H1 (cell line): ENCODE measurements at regions of chr2 and their contacts with region 1.

Region 1: GRCh38 chr2:47767880-47768609 is 14.9 kb upstream of the MSH6 start:
- DNase-seq: peak; percentile 54 to 99
- H3K4me3 ChIP-seq: no peak overlapping the region
- H3K27ac ChIP-seq: no peak overlapping the region
- H3K4me1 ChIP-seq: no peaks in the 10 kb centered on the region
- H3K27me3 ChIP-seq: no peaks in the 10 kb centered on the region
- CTCF ChIP-seq: peak; percentile 93 to 98 (median 95)
- EP300 ChIP-seq: no peak
- POLR2A ChIP-seq: no peak
- RAD21 ChIP-seq: peak; percentile 100

Region 2: DNA sequence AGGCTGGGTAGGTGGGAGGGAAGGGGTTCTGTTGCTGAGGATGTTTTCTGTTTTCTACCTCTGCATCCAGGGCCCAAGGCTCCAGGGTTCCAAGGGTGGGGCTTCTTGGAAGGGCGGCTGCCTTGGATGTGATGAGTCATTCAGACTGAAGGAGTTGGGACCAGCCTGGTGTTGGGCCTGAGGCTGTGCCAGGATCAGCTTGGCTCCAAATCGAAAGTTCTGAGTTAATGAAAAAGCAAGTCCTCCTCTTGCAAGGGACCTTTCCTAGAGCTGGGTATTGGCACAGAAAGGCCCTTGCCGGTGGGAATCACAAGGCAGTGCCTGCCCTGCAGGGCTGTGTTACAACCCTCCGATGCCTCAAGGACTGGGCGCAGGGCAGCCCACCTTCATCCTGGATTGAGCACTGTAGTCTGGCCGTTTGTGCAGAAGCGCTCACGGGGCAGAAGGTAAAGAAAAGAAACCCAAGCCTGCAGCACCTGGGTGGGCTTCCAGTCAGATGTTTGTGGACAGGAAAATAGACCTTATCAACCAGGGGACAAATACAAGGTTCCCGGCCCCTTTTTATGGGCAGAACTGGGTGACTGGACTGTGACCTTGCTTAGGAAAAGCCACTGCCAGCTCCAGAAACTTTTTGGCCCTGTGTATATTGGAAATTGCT is 799.9 kb before region 1 on chr2:
- CTCF ChIA-PET with region 1: no interaction called
- POLR2A ChIA-PET with region 1: no interaction called
- DNase-seq: no peak
- H3K4me3 ChIP-seq: no peak overlapping the region
- H3K27ac ChIP-seq: no peak overlapping the region
- H3K4me1 ChIP-seq: no peaks in the 10 kb centered on the region
- H3K27me3 ChIP-seq: no peaks in the 10 kb centered on the region
- CTCF ChIP-seq: no peak
- EP300 ChIP-seq: no peak
- POLR2A ChIP-seq: no peak
- RAD21 ChIP-seq: no peak

Region 3: GRCh38 chr2:47437287-47437686 is 330.8 kb before region 1 on chr2:
- CTCF ChIA-PET with region 1: interaction called, 19 read pairs
- POLR2A ChIA-PET with region 1: no interaction called
- DNase-seq: no peak
- H3K4me3 ChIP-seq: no peak overlapping the region
- H3K27ac ChIP-seq: no peak overlapping the region
- H3K4me1 ChIP-seq: no peaks in the 10 kb centered on the region
- H3K27me3 ChIP-seq: no peaks in the 10 kb centered on the region
- CTCF ChIP-seq: no peak; a peak in 1 of 4 replicates
- EP300 ChIP-seq: no peak
- POLR2A ChIP-seq: no peak
- RAD21 ChIP-seq: peak; percentile 38 to 47

Region 4: DNA sequence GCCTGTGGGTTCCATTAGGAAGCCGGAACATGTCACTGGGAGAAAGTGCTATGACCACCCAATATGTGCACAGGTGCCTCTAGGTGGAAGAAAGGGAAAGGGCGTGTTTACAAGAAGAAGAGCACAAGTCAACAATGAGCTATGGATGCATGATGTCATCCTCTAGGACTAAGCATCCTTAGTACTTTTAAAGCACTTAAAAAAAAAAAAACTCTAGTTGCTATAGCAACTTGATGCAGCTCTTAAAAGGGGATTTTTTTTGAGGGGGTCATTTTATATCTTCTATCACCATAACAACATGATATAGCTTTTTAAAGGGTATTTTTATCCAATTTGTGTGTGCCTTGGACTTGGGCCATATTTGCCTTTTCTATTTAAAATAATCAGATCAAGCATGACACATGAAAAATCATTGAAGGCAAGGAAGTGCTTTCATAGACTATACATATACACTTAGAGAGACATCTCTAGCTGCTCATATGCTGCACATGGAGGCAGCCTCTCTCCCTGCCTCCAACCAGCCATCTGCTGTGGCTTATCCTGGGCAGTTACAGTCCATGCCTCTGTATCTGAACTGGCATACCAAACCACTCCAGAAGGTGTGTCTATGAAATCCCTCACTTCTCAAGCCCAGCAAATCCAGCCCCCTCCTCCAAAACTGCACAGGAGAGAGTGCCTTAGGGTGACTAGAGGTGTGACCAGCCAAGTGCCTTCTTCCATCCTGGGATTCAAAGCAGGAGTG is 199.8 kb before region 1 on chr2:
- CTCF ChIA-PET with region 1: interaction called, 14 read pairs
- POLR2A ChIA-PET with region 1: interaction called, 3 read pairs
- DNase-seq: no peak
- H3K4me3 ChIP-seq: peak overlapping the region; percentile 57 to 64 (median 61); a peak in 4 of 8 replicates
- H3K27ac ChIP-seq: no peak overlapping the region
- H3K4me1 ChIP-seq: peaks cover 2 to 18% (median 7%) of the 10 kb centered on the region in 4 experiments; a peak in 5 of 7 replicates
- H3K27me3 ChIP-seq: peaks cover 8 to 36% (median 29%) of the 10 kb centered on the region in 4 experiments
- CTCF ChIP-seq: no peak
- EP300 ChIP-seq: no peak
- POLR2A ChIP-seq: no peak
- RAD21 ChIP-seq: no peak

Region 5: GRCh38 chr2:47719099-47719498 is 48.9 kb before region 1 on chr2:
- CTCF ChIA-PET with region 1: interaction called, 30 read pairs
- POLR2A ChIA-PET with region 1: no interaction called
- DNase-seq: no peak
- H3K4me3 ChIP-seq: no peak overlapping the region
- H3K27ac ChIP-seq: no peak overlapping the region
- H3K4me1 ChIP-seq: no peaks in the 10 kb centered on the region; a peak in 1 of 7 replicates
- H3K27me3 ChIP-seq: no peaks in the 10 kb centered on the region
- CTCF ChIP-seq: no peak
- EP300 ChIP-seq: no peak
- POLR2A ChIP-seq: no peak
- RAD21 ChIP-seq: no peak

Region 6: GRCh38 chr2:47917276-47917961 is 149.4 kb after region 1 on chr2:
- CTCF ChIA-PET with region 1: no interaction called
- POLR2A ChIA-PET with region 1: no interaction called
- DNase-seq: no peak
- H3K4me3 ChIP-seq: no peak overlapping the region
- H3K27ac ChIP-seq: no peak overlapping the region
- H3K4me1 ChIP-seq: no peaks in the 10 kb centered on the region
- H3K27me3 ChIP-seq: no peaks in the 10 kb centered on the region
- CTCF ChIP-seq: no peak
- EP300 ChIP-seq: no peak
- POLR2A ChIP-seq: no peak
- RAD21 ChIP-seq: no peak

Region 7: GRCh38 chr2:48209214-48209885 is 441.3 kb after region 1 on chr2:
- CTCF ChIA-PET with region 1: no interaction called
- POLR2A ChIA-PET with region 1: no interaction called
- DNase-seq: no peak
- H3K4me3 ChIP-seq: no peak overlapping the region
- H3K27ac ChIP-seq: no peak overlapping the region
- H3K4me1 ChIP-seq: peaks cover 3 to 18% (median 11%) of the 10 kb centered on the region in 4 experiments; a peak in 5 of 7 replicates
- H3K27me3 ChIP-seq: no peaks in the 10 kb centered on the region
- CTCF ChIP-seq: no peak
- EP300 ChIP-seq: no peak
- POLR2A ChIP-seq: no peak
- RAD21 ChIP-seq: no peak